ENCODE measurements at regions of chr3 and their contacts with region 1.

Region 1: GRCh38 chr3:196073188-196073838 is 8.6 kb downstream of the TFRC start:
- DNase-seq: no peak
- H3K4me3 ChIP-seq: no peak overlapping the region
- H3K27ac ChIP-seq: no peak overlapping the region
- H3K4me1 ChIP-seq: no peaks in the 10 kb centered on the region
- H3K27me3 ChIP-seq: no peaks in the 10 kb centered on the region
- CTCF ChIP-seq: peak; percentile 60 to 74 (median 60)
- POLR2A ChIP-seq: no peak

Region 2: DNA sequence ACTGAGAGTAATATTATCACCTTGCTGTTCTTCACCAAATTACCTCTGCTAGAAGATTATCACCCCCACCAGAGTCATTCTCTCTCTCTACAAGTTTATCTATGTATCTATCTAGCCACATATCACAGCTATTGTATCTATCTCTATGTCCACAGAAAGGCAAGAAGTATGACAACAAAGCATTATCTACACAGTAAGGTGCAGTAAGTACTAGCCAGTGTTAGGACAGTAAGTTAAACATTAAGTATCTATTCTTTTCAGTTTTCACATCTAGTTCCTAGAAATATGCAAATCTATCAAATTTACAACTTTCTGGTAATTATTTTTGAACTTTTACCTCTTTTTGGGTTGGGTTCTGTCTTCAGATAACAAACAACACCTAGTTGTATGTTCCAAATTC is 775.9 kb before region 1 on chr3:
- intact Hi-C with region 1: no loop called
- DNase-seq: no peak
- H3K4me3 ChIP-seq: no peak overlapping the region
- H3K27ac ChIP-seq: no peak overlapping the region
- H3K4me1 ChIP-seq: no peaks in the 10 kb centered on the region
- H3K27me3 ChIP-seq: no peaks in the 10 kb centered on the region
- CTCF ChIP-seq: no peak
- POLR2A ChIP-seq: no peak

Region 3: DNA sequence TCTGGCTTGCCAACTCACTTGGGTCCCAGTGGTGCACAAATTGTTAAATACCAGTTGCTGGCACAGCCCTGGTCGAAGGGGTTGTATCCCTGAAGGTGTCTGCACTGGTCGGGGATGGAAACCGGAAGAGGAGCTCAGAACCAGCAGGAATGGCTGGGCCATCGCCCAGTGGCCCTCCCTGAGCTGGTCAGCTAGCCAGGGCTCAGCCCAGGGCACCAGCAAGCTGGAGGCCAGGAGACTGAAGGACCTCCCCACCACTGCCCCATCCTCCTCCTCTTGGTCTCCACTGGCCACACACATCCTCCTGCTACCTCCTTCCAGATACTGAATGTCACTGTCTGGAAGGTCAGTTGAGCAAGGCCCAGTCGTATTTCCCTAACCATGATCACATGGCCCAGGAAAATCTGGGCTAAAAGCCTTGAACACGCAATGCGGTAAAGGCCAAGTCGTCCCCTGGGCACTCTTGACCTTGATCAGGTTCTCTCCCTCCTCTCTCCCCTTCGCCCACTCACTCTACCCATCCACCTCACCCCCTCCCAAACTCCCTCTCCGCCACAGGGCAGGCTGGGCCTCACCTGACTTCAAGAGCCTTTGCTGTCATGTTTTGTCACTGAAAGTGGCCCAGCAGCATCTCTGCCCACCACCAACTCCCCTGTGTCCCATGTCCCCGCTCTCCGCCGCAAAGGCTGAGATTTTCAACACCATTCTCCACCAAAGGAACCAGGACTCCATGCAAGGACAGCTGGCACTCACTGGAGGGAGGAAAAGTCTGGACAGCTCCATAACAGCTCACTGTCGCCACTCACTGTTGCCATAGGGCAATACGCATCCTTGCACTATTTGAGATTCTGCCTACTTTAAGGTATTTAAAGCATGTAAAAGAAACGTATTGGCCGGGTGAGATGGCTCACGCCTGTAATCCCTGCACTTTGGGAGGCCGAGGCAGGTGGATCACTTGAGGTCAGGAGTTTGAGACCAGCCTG is 125.7 kb after region 1 on chr3:
- intact Hi-C with region 1: loop called (anchors 5 kb)
- DNase-seq: peak in 1 of 2 donors; percentile 96
- H3K4me3 ChIP-seq: no peak overlapping the region
- H3K27ac ChIP-seq: no peak overlapping the region
- H3K4me1 ChIP-seq: no peaks in the 10 kb centered on the region
- H3K27me3 ChIP-seq: no peaks in the 10 kb centered on the region
- CTCF ChIP-seq: no peak
- POLR2A ChIP-seq: no peak